K562 (cell line): ENCODE measurements at regions of chr6 and their contacts with region 1.

Region 1: DNA sequence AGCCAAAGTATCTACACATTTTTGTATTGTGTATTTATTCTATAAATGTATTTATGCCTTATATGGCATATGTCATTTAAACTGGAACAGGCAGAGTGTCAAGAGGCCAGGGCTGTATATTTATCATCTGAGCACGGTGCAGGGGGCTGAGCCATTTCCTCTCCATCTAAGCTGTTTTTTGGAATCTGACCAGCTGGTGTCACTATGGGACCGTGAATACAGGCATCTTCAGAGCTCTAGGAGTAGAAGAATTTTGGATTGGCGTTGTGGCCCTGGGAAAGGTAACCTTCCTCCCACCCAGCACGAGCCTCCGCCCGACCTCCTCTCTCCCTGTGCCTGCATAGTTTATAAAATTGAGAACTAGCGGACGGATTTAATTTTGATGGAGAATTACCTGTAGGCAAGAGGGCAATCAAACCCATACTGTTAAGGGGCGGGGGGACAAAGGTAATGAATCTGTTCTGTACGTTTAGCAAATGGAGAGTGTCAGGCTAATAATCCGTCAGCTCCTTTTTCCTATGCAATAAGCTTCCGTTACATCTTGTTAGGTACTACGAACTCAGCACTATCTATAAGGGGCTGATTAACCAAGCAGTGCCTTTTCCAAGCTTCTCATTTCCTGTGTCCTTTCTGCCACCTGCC is 29.0 kb upstream of the EEF1E1 start:
- DNase-seq: peak; percentile 50 to 75 (median 58)
- ATAC-seq: peak; percentile 97
- H3K4me3 ChIP-seq: no peak overlapping the region
- H3K27ac ChIP-seq: no peak overlapping the region
- H3K4me1 ChIP-seq: no peaks in the 10 kb centered on the region
- H3K27me3 ChIP-seq: peaks cover 22 to 43% of the 10 kb centered on the region in 2 experiments
- CTCF ChIP-seq: peak; percentile 73 to 86 (median 74)
- EP300 ChIP-seq: no peak
- POLR2A ChIP-seq: no peak
- RAD21 ChIP-seq: peak; percentile 86 to 88

Region 2: DNA sequence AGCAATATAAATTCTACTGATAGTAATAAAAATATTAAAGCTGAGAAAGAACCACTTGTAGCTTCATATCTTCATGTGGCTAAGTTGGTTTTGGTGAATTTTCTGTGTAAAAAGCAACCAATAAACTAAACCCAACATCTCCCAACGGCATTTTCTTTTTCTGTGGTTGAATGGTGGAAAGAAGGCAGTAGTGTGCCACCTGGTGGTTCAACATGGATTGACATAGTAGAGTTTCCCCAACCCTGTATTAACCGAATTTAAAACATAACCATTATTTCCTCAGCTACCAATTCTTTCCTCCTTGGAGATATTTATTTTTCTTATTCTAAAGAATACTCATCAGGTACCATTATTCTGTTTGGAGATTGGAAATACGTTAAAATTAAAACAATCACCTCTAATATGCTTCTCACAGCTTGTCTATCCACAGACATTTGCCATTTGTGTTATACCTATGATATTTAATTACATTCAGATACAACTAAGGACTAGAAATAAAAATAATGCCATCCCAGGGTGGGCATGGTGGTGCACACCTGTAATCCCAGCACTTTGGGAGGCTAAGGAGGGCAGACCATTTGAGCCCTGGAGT is 88.1 kb after region 1 on chr6:
- CTCF ChIA-PET with region 1: interaction called, 5 read pairs
- POLR2A ChIA-PET with region 1: interaction called, 5 read pairs
- in situ Hi-C with region 1: loop called (anchors 5 kb)
- intact Hi-C with region 1: loop called (anchors 1 kb)
- DNase-seq: peak; percentile 61 to 71 (median 62)
- ATAC-seq: peak; percentile 95
- H3K4me3 ChIP-seq: no peak overlapping the region
- H3K27ac ChIP-seq: no peak overlapping the region
- H3K4me1 ChIP-seq: no peaks in the 10 kb centered on the region
- H3K27me3 ChIP-seq: peaks cover 0 to 10% of the 10 kb centered on the region in 2 experiments; a peak in 2 of 5 replicates
- CTCF ChIP-seq: peak; percentile 69 to 84 (median 69); a peak in 5 of 6 replicates
- EP300 ChIP-seq: no peak
- POLR2A ChIP-seq: no peak
- RAD21 ChIP-seq: peak; percentile 88 to 90

Region 3: GRCh38 chr6:8983188-8983688 is 851.9 kb after region 1 on chr6:
- CTCF ChIA-PET with region 1: no interaction called
- POLR2A ChIA-PET with region 1: no interaction called
- in situ Hi-C with region 1: no loop called
- intact Hi-C with region 1: loop called (anchors 2 kb)
- DNase-seq: peak; percentile 68 to 80 (median 73)
- ATAC-seq: peak; percentile 98
- H3K4me3 ChIP-seq: no peak overlapping the region
- H3K27ac ChIP-seq: no peak overlapping the region
- H3K4me1 ChIP-seq: no peaks in the 10 kb centered on the region
- H3K27me3 ChIP-seq: no peaks in the 10 kb centered on the region
- CTCF ChIP-seq: peak; percentile 94 to 97 (median 96)
- EP300 ChIP-seq: no peak
- POLR2A ChIP-seq: no peak
- RAD21 ChIP-seq: peak; percentile 85 to 87